Dendritic cell treated with granulocyte-macrophage colony-stimulating factor and Interleukin-4, amounts not matched to agents 40 ng/mL and 50 ng/mL, for 4 days (primary cell): ENCODE measurements at regions of chr5 and their contacts with region 1.

Region 1: DNA sequence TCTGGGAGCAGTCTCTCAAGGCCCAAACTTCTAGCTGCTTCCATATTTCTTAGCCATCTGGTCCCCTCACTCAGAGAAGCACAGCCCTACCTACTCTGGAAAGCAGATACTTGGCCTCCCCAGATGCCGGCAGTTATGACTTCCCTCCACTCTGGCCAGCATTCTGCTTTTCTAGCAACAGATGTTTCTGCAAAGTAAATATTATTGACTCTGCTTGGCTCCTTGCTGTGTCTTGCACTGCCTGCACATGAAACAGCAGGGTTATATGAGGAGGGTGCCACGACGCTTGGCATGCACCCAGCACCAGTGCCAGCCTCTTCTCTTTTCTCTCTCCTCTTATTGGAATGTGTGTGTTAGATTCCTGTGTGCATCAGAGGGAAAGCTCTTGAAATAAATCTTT is 99.7 kb downstream of the ARHGAP26 start:
- H3K4me3 Mint-ChIP-seq: no peak overlapping the region
- H3K27ac Mint-ChIP-seq: peak overlapping the region; percentile 38
- H3K4me1 Mint-ChIP-seq: peaks cover 79% of the 10 kb centered on the region
- H3K27me3 Mint-ChIP-seq: no peaks in the 10 kb centered on the region

Region 2: GRCh38 chr5:142769741-142770631 is 99.9 kb before region 1 on chr5 and contains the start of gene ARHGAP26:
- intact Hi-C with region 1: loop called (anchors 2 kb)
- H3K4me3 Mint-ChIP-seq: peak within 1 kb of the TSS; percentile 98
- H3K27ac Mint-ChIP-seq: peak within 1 kb of the TSS; percentile 94
- H3K4me1 Mint-ChIP-seq: peaks cover 58% of the 10 kb centered on the region
- H3K27me3 Mint-ChIP-seq: no peaks in the 10 kb centered on the region